ENCODE measurements at regions of chr3 and their contacts with region 1.

Region 1: GRCh38 chr3:127970966-127971592 is 56.0 kb downstream of the KBTBD12 start:
- DNase-seq: peak in 5 of 9 donors; percentile 12 to 25 (median 20)
- ATAC-seq: peak; percentile 58
- H3K4me3 ChIP-seq: no peak overlapping the region
- H3K4me3 Mint-ChIP-seq: no peak overlapping the region
- H3K27ac ChIP-seq: no peak overlapping the region
- H3K27ac Mint-ChIP-seq: no peak overlapping the region
- H3K4me1 ChIP-seq: no peaks in the 10 kb centered on the region
- H3K4me1 Mint-ChIP-seq: no peaks in the 10 kb centered on the region
- H3K27me3 ChIP-seq: no peaks in the 10 kb centered on the region
- H3K27me3 Mint-ChIP-seq: peaks cover 15 to 42% (median 24%) of the 10 kb centered on the region in 5 donors

Region 2: GRCh38 chr3:127652231-127652995 is 318.7 kb before region 1 on chr3:
- CTCF ChIA-PET with region 1: no interaction called
- POLR2A ChIA-PET with region 1: no interaction called
- intact Hi-C with region 1: loop called in 1 of 2 experiments (anchors 1 kb)
- DNase-seq: peak in 3 of 9 donors; percentile 16 to 44 (median 35)
- ATAC-seq: peak; percentile 83
- H3K4me3 ChIP-seq: no peak overlapping the region
- H3K4me3 Mint-ChIP-seq: no peak overlapping the region
- H3K27ac ChIP-seq: no peak overlapping the region
- H3K27ac Mint-ChIP-seq: peak overlapping the region in 1 of 9 donors; percentile 3
- H3K4me1 ChIP-seq: no peaks in the 10 kb centered on the region
- H3K4me1 Mint-ChIP-seq: peaks cover 0 to 2% (median 0%) of the 10 kb centered on the region in 7 donors
- H3K27me3 ChIP-seq: no peaks in the 10 kb centered on the region
- H3K27me3 Mint-ChIP-seq: peaks cover 0 to 4% (median 0%) of the 10 kb centered on the region in 5 donors

Region 3: GRCh38 chr3:127951276-127951675 is 19.8 kb before region 1 on chr3:
- CTCF ChIA-PET with region 1: no interaction called
- POLR2A ChIA-PET with region 1: no interaction called
- intact Hi-C with region 1: loop called in 1 of 2 experiments (anchors 1 kb)
- DNase-seq: no peak
- ATAC-seq: no peak
- H3K4me3 ChIP-seq: no peak overlapping the region
- H3K4me3 Mint-ChIP-seq: no peak overlapping the region
- H3K27ac ChIP-seq: no peak overlapping the region
- H3K27ac Mint-ChIP-seq: no peak overlapping the region
- H3K4me1 ChIP-seq: no peaks in the 10 kb centered on the region
- H3K4me1 Mint-ChIP-seq: no peaks in the 10 kb centered on the region
- H3K27me3 ChIP-seq: peaks cover 0 to 3% of the 10 kb centered on the region in 2 donors
- H3K27me3 Mint-ChIP-seq: peaks cover 31 to 64% (median 46%) of the 10 kb centered on the region in 5 donors

Region 4: DNA sequence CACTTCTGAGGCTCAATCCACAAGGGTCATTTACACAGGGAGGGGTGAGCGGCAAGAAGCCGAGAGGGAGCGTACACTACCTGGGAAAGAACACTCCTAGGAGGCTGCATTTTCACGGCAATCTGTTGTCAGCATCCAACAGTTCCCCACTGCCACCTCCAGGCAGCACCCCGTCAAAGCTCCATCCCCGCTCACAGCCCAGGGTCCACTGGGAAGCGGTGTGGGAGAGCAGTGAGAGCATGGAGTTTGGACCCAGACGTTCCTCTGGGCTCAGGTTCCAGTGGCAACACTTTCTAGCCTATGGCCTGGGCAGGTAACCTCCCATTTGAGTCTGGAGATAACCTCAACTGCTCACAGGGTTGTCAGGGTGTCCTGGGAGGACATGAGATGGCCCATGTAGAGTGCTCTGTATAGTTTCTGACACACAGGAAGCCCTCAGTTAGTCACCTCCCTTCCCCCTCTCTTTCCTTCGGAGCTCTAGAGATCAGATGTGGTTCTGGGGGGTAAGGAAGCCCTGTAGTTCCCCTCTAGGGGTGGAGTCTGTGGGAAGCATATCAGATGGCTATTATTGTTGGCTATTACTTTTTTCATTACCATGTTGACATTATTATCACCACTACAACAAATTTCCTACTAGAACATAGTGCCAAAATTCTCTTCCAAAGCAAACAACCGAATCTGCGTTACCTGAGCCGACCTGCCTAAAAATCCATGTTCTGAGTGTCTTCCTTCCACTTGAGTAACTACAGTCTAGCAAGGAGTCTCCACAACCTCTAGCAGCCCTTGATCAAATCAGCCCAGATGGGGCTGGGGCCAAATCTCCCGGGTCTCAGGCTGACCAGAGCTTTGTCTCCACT is 123.4 kb after region 1 on chr3:
- CTCF ChIA-PET with region 1: no interaction called
- POLR2A ChIA-PET with region 1: no interaction called
- intact Hi-C with region 1: no loop called
- DNase-seq: no peak
- ATAC-seq: peak; percentile 30
- H3K4me3 ChIP-seq: no peak overlapping the region
- H3K4me3 Mint-ChIP-seq: no peak overlapping the region
- H3K27ac ChIP-seq: no peak overlapping the region
- H3K27ac Mint-ChIP-seq: peak overlapping the region in 2 of 9 donors; percentile 14 to 53
- H3K4me1 ChIP-seq: no peaks in the 10 kb centered on the region
- H3K4me1 Mint-ChIP-seq: peaks cover 1 to 16% (median 6%) of the 10 kb centered on the region in 7 donors
- H3K27me3 ChIP-seq: no peaks in the 10 kb centered on the region
- H3K27me3 Mint-ChIP-seq: no peaks in the 10 kb centered on the region

Measured in naive thymus-derived CD4-positive, alpha-beta T cell (primary cell).